Astrocyte of the cerebellum (primary cell): ENCODE measurements at regions of chr20 and their contacts with region 1.

Region 1: DNA sequence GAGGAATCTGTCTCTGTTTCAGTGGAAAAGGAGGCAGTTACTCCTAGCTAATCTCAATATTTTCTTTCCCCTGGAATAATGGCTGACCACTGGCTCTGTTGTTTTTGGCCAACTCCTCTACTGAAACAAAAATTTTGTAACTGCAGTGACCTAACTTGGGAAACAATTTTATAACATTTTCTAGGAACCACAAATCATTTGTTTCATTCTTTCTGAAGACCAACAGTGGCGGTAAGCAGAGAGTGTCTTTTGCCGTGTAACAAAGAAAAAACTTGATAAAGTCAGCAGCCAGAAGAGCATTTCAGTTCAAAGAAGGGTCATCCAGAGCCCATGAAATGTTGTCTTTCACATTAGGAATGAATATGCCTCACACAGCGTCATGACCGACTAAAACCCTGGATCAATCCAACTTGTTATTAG is 11.8 kb upstream of the BFSP1 start:
- DNase-seq: peak; percentile 92
- H3K4me3 ChIP-seq: no peak overlapping the region
- CTCF ChIP-seq: no peak

Region 2: GRCh38 chr20:17327185-17328148 is 215.5 kb before region 1 on chr20:
- in situ Hi-C with region 1: no loop called
- DNase-seq: no peak
- H3K4me3 ChIP-seq: no peak overlapping the region
- CTCF ChIP-seq: no peak

Region 3: DNA sequence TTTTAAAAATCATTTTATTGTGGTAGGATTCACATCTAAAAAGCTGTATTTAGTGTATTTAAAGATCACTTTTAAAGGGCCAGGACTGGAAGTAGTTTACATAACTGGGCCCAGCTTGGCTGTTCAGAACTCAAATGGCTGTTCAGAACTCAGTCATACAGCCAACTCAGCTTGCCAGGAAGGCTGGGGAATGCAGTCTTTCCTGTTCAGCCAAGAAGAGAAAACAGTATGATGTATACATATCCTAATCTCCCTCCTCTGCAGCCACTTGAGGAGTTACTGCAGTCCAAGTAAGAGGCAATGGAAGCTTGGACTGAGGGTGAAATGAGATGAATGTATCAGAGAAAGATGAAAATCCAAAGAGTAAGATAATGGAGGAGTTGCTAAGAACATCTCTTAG is 51.4 kb after region 1 on chr20:
- in situ Hi-C with region 1: loop called (anchors 5 kb)
- DNase-seq: no peak
- H3K4me3 ChIP-seq: no peak overlapping the region
- CTCF ChIP-seq: no peak

Region 4: DNA sequence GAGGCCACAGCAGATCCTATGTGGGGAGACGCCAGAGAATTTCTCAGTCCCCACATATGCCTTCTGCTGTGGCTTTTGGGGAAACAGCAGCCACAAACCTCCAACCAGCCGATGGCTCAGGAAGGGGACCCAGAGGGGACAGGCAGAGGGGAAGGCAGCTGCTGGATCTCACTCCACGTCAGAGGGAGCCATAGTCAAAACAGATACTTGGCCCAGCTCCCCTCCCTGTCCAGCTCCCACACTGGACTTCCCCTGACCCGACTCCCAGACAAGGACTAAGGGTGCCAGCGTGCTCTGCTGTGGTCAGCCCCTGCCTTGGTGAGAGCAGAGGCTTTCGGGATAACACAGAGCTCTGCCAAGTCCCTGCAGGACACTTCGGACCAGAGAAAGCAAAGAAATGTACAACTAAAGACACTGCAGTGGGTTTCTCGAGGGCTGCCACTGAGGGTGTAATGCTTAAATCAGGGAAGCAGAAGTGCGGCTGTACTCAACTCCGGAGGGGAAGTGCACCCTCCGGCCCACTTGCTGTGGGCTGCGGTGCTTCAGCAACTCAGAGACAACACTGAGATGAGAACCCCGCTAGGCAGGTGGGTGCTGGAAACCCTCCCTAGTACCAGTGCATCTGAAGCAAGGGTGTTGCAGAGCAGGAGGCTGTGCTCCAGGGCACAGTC is 91.8 kb after region 1 on chr20:
- in situ Hi-C with region 1: no loop called
- DNase-seq: no peak
- H3K4me3 ChIP-seq: no peak overlapping the region
- CTCF ChIP-seq: no peak

Region 5: DNA sequence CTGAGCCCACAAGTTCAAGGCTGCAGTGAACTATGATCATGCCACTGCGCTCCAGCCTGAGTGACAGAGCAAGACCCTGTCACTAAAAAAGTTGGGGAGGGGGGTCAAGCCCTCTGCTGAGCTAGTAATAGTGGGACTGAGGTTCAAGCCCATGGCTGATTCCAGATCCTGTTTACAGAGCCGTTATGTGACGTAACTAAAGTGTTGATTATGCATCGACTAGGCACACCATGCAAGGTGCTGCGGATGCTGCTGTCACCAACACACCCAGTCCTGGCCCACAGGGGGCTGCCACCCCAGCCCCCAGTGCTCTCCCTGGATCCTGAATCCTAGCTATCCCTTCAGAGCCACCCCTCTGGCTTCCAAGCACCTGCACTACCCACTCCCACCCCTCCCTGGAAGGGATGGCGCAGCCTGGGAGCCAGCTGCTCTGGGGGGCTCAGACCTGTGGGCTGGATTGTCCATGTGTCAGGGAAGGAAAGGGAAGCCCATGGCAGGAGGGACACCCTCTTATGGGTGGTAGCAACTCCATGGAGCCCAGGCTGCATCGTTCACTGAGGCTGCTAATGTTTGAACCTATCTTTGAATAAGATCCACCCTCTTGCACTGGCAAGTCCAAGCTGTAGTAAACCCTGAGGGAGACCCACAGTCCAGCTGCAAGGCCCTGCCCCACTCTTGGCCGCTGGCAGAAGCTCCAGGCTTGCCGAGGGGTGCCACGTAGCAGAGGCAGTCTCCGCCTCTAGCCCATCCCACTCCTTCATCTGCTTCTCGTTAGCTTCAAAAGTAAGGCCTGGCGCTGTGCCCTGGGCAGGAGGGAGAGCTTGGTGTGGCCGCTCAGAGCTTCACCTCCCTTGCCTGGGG is 330.6 kb after region 1 on chr20:
- in situ Hi-C with region 1: no loop called
- DNase-seq: peak; percentile 90
- H3K4me3 ChIP-seq: no peak overlapping the region
- CTCF ChIP-seq: no peak